CD8-positive, alpha-beta T cell (primary cell): ENCODE measurements at regions of chr2 and their contacts with region 1.

Region 1: GRCh38 chr2:121363632-121364420 is 78.8 kb upstream of the TFCP2L1 start:
- DNase-seq: no peak
- ATAC-seq: no peak
- H3K4me3 ChIP-seq: no peak overlapping the region
- H3K4me3 Mint-ChIP-seq: no peak overlapping the region
- H3K27ac ChIP-seq: no peak overlapping the region
- H3K27ac Mint-ChIP-seq: peak overlapping the region; percentile 50
- H3K4me1 ChIP-seq: no peaks in the 10 kb centered on the region
- H3K4me1 Mint-ChIP-seq: no peaks in the 10 kb centered on the region
- H3K27me3 ChIP-seq: no peaks in the 10 kb centered on the region
- H3K27me3 Mint-ChIP-seq: no peaks in the 10 kb centered on the region
- CTCF ChIP-seq: no peak

Region 2: DNA sequence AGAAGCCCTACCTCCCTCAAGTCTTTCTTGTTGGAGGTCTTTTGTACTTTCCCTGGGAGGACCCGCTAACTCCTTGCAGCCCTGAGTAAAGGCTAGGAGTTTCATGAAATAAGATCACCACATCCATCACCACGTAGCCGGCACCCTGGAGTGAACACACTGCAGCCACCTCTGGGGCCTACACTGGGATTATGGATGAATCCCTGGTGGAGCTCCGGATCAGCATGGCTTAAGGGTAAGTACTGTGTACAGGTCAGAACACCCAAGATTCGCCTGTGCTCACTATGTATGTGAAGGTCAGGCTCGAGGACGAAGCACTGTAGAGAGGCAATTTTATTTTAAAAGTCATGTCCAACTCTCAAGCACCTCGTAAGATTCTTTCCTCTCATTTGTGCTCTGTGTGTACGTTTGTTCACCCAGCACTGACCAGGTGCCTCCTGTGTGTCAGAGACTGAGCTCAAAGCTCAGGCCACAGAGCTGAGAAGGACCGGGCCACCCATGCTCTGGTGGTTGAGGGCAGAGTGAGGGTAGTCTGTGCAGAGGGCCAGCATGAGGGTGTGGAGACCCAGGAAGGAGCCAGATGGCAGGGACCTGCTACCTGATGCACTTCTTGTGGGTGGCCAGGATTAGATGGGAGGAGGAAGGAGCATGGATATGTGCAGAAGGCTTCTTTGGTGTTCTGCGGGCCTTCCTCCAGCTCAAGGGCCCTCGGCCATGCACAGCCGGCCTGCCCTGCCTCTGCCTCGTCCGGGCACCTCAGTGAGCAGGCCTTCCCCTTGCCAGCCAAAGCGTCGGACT is 12.1 kb before region 1 on chr2:
- CTCF ChIA-PET with region 1: interaction called, 11 read pairs
- POLR2A ChIA-PET with region 1: no interaction called
- intact Hi-C with region 1: no loop called
- DNase-seq: no peak
- ATAC-seq: no peak
- H3K4me3 ChIP-seq: no peak overlapping the region
- H3K4me3 Mint-ChIP-seq: no peak overlapping the region
- H3K27ac ChIP-seq: no peak overlapping the region
- H3K27ac Mint-ChIP-seq: no peak overlapping the region
- H3K4me1 ChIP-seq: no peaks in the 10 kb centered on the region
- H3K4me1 Mint-ChIP-seq: no peaks in the 10 kb centered on the region
- H3K27me3 ChIP-seq: no peaks in the 10 kb centered on the region
- H3K27me3 Mint-ChIP-seq: no peaks in the 10 kb centered on the region
- CTCF ChIP-seq: no peak